Panc1 (cell line): ENCODE measurements at regions of chr4 and their contacts with region 1.

Region 1: DNA sequence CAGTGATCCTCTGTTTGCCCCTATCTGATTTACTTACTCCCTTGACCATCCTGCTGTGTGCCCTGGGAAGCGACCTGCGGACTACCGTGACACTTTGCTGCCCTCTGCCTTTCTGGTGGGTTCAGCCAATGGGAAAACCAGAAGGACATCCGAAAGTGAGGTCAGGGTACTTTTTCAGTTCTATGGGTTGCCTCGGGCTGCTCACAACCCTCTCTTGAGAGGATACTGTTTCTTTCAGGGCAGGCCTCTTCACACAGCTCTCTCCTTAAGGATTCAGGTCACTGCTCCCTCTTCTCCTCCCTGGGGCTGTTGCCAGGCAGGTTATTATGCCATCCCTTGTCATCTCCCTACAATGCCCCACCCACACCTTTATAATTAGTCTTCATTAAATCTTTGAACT is 21.4 kb downstream of the PLAC8 start:
- DNase-seq: no peak
- ATAC-seq: no peak
- H3K4me3 ChIP-seq: no peak overlapping the region
- H3K27ac ChIP-seq: no peak overlapping the region
- H3K4me1 ChIP-seq: peaks cover 5% of the 10 kb centered on the region
- H3K27me3 ChIP-seq: no peaks in the 10 kb centered on the region
- CTCF ChIP-seq: no peak

Region 2: GRCh38 chr4:82989575-82990429 is 103.3 kb before region 1 on chr4:
- CTCF ChIA-PET with region 1: no interaction called
- POLR2A ChIA-PET with region 1: no interaction called
- in situ Hi-C with region 1: no loop called
- intact Hi-C with region 1: no loop called
- DNase-seq: no peak
- ATAC-seq: 0 out of 2 replicates have a peak, but pooled peaks have one; percentile 30
- H3K4me3 ChIP-seq: no peak overlapping the region
- H3K27ac ChIP-seq: no peak overlapping the region
- H3K4me1 ChIP-seq: peaks cover 4% of the 10 kb centered on the region; the same call in 1 of the 2 replicates
- H3K27me3 ChIP-seq: no peaks in the 10 kb centered on the region
- CTCF ChIP-seq: no peak

Region 3: DNA sequence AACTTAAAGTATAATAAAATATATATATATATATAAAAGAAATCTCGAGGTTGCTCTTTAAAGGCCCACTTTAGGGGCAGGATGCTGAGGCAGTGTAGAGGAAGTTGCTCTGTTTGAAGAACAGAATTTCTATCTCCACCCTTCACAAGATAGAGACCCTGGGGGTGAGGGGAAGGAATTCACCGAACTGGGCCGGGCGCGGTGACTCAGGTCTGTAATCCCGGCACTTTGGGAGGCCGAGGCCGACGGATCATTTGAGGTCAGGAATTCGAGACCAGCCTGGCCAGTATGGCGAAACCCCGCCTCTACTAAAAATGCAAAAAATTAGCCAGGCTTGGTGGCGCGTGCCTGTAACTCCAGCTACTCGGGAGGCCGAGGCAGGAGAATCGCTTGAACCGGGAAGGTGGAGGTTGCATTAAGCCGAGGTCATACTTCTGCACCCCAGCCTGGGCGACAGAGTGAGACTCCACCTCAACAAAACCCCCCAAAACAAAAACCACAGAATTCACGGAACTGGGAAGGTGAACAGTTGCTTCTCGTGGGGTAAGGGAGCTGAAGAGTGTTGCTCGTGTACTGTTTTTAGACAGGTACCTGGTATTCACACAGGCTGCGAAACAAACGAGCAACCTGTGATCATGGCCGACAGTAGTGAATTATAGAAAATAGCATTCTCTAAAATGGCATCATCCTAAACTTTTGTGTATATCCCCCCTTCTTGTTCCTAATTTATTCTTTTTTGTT is 15.2 kb after region 1 on chr4:
- CTCF ChIA-PET with region 1: interaction called, 10 read pairs
- POLR2A ChIA-PET with region 1: interaction called, 7 read pairs
- in situ Hi-C with region 1: no loop called
- intact Hi-C with region 1: no loop called
- DNase-seq: no peak
- ATAC-seq: no peak
- H3K4me3 ChIP-seq: peak overlapping the region; percentile 44 to 67
- H3K27ac ChIP-seq: peak overlapping the region; percentile 99
- H3K4me1 ChIP-seq: peaks cover 37% of the 10 kb centered on the region
- H3K27me3 ChIP-seq: no peaks in the 10 kb centered on the region
- CTCF ChIP-seq: no peak